CD8-positive, alpha-beta memory T cell (primary cell): ENCODE measurements at regions of chr17 and their contacts with region 1.

Region 1: GRCh38 chr17:76271669-76272540 is 6.8 kb downstream of the UBALD2 start:
- DNase-seq: peak; percentile 44 to 82 (median 71)
- H3K4me3 ChIP-seq: peak overlapping the region; percentile 59
- H3K4me3 Mint-ChIP-seq: peak overlapping the region; percentile 71 to 91 (median 82)
- H3K27ac ChIP-seq: peak overlapping the region; percentile 67
- H3K27ac Mint-ChIP-seq: peak overlapping the region; percentile 92 to 98 (median 95)
- H3K4me1 ChIP-seq: peaks cover 74% of the 10 kb centered on the region
- H3K4me1 Mint-ChIP-seq: peaks cover 54 to 79% (median 54%) of the 10 kb centered on the region in 3 donors
- H3K27me3 ChIP-seq: no peaks in the 10 kb centered on the region
- H3K27me3 Mint-ChIP-seq: no peaks in the 10 kb centered on the region

Region 2: DNA sequence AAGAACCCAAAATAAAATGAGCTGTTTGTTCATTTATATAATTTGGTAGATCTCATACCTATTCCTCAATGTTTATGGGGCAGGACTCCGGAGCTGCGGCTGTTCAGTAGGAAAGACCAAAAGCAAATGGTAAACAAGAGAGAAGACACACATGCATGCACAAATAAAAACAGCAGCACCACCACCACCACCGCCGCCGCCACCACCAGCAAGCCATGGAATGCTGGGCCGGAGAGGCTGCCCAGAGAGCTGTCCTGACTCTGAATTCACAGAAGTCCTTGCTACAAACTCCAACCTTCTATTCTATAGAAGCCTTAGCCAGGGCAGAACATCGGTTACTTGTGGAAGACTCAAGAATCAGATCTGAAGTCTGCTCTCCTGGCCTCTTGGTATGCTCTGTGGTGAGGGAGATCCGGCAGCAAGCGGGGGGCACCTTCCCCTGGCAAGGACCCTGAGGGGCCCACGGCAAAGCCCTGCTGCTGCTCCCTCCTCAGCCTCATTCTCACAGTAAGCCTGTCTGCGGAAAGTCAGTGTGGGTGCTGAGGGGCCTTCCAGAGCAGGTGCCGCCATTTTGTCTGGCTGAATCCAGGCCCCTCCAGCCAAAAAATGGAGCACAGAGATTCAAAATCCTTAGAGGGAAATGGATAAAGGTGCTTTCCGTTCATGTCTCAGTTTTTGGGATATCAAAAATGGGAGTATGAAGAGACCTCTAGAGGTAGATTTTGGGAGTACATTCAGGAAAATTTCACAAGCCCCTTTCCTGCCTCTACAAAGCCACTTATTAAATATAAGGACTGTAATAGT is 124.5 kb before region 1 on chr17:
- CTCF ChIA-PET with region 1: interaction called, 3 read pairs
- POLR2A ChIA-PET with region 1: interaction called, 10 read pairs
- DNase-seq: no peak
- H3K4me3 ChIP-seq: no peak overlapping the region
- H3K4me3 Mint-ChIP-seq: peak overlapping the region in 1 of 7 donors; percentile 36
- H3K27ac ChIP-seq: no peak overlapping the region
- H3K27ac Mint-ChIP-seq: peak overlapping the region; percentile 70 to 98 (median 96)
- H3K4me1 ChIP-seq: peaks cover 64% of the 10 kb centered on the region
- H3K4me1 Mint-ChIP-seq: peaks cover 63 to 76% (median 65%) of the 10 kb centered on the region in 3 donors
- H3K27me3 ChIP-seq: no peaks in the 10 kb centered on the region
- H3K27me3 Mint-ChIP-seq: peaks cover 0 to 1% of the 10 kb centered on the region in 2 donors